Gastrocnemius medialis (tissue), 4 donors: ENCODE measurements at regions of chr11 and their contacts with region 1.

Region 1: GRCh38 chr11:1935156-1936071 is 11.7 kb upstream of the MRPL23 start:
- DNase-seq: peak in 1 of 2 donors; percentile 1
- ATAC-seq: no peak
- H3K4me3 ChIP-seq: no peak overlapping the region
- H3K27ac ChIP-seq: peak overlapping the region in 2 of 4 donors; percentile 24 to 78
- H3K4me1 ChIP-seq: peaks cover 0 to 6% of the 10 kb centered on the region in 2 donors
- H3K27me3 ChIP-seq: no peaks in the 10 kb centered on the region
- CTCF ChIP-seq: no peak
- POLR2A ChIP-seq: no peak

Region 2: GRCh38 chr11:1598816-1599215 is 336.6 kb before region 1 on chr11:
- in situ Hi-C with region 1: no loop called
- intact Hi-C with region 1: no loop called
- DNase-seq: no peak
- ATAC-seq: no peak
- H3K4me3 ChIP-seq: no peak overlapping the region
- H3K27ac ChIP-seq: no peak overlapping the region
- H3K4me1 ChIP-seq: no peaks in the 10 kb centered on the region
- H3K27me3 ChIP-seq: peaks cover 0 to 6% (median 0%) of the 10 kb centered on the region in 3 donors
- CTCF ChIP-seq: no peak
- POLR2A ChIP-seq: no peak

Region 3: GRCh38 chr11:1912289-1912878 is 23.0 kb before region 1 on chr11:
- in situ Hi-C with region 1: no loop called
- intact Hi-C with region 1: loop called (anchors 1 kb)
- DNase-seq: peak in 1 of 2 donors; percentile 28
- ATAC-seq: peak in 1 of 2 donors; percentile 22
- H3K4me3 ChIP-seq: no peak overlapping the region
- H3K27ac ChIP-seq: peak overlapping the region; percentile 55 to 76 (median 62)
- H3K4me1 ChIP-seq: peaks cover 13 to 20% of the 10 kb centered on the region in 2 donors
- H3K27me3 ChIP-seq: no peaks in the 10 kb centered on the region
- CTCF ChIP-seq: no peak
- POLR2A ChIP-seq: peak in 1 of 2 donors; percentile 19

Region 4: GRCh38 chr11:1953489-1954266 is 18.3 kb after region 1 on chr11:
- in situ Hi-C with region 1: no loop called
- intact Hi-C with region 1: no loop called
- DNase-seq: peak; percentile 78 to 88
- ATAC-seq: peak; percentile 80
- H3K4me3 ChIP-seq: no peak overlapping the region
- H3K27ac ChIP-seq: peak overlapping the region; percentile 67 to 82 (median 78)
- H3K4me1 ChIP-seq: no peaks in the 10 kb centered on the region
- H3K27me3 ChIP-seq: no peaks in the 10 kb centered on the region
- CTCF ChIP-seq: peak in 2 of 5 experiments; percentile 39 to 55
- POLR2A ChIP-seq: no peak